Calu3 (cell line): ENCODE measurements at regions of chr17 and their contacts with region 1.

Region 1: DNA sequence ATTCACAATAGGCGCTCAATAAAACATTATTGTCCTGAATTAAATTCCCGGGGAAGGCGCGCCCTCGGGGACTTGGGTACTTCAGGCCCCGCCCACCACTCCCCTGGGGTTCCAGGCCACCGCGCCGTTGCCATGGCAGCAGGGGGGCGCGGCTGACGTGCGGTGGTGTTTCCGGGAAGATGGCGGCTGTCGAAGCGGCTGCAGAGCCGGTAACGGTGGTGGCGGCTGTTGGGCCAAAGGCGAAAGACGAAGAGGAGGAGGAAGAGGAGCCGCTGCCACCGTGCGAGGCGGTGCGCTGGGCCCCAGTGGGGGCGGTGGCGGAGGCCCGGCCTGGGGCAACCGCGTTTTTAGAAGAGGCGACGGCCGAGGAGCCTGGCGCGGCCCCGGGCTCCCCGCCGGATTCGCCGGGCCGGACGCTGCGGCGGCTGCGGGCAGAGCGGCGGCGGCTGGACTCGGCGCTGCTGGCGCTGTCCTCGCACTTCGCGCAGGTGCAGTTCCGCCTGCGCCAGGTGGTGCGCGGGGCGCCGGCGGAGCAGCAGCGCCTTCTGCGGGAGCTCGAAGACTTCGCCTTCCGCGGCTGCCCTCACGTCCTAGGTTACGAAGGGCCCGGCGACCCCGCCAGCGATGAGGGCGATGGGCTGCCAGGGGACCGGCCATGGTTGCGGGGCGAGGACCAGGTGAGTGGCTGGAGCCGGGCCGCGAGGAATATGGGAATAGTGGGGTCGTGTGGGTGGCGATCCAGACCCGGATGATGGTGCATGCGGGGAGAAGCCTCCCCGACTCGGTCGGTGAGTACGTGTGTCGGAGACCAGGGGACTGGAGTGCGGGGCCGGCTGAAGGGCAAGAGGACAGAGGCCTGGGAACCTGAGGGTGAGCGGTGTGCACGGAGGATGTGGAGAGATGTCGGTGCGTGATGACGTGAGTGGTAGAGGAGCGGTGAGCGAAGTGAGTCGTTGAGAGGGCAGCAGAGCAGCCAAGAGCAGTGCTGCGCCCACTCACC is at the start of gene RUNDC1:
- DNase-seq: peak; percentile 99
- H3K4me3 Mint-ChIP-seq: peak within 1 kb of the TSS; percentile 98
- H3K27ac Mint-ChIP-seq: peak within 1 kb of the TSS; percentile 86
- H3K4me1 Mint-ChIP-seq: peaks cover 33% of the 10 kb centered on the region
- H3K27me3 Mint-ChIP-seq: no peaks in the 10 kb centered on the region
- CTCF ChIP-seq: peak; percentile 20
- total RNA-seq, gene RUNDC1: 32.8 and 35.4 TPM in 2 replicates

Region 2: DNA sequence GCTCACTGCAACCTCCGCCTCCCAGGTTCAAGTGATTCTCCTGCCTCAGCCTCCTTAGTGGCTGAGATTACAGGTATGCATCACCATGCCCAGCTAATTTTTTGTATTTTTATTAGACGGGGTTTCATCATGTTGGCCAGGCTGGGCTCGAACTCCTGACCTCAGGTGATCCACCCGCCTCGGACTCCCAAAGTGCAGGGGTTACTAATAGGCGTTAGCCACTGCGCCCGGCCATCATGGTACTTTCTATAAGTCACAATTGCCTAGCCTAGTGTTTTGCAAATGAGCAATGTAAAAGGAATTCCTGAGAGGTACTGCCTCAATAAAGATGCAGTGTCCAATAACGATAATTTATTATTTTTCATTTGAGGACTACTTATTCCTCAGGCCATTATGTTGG is 389.3 kb before region 1 on chr17:
- CTCF ChIA-PET with region 1: interaction called, 10 read pairs
- intact Hi-C with region 1: no loop called
- DNase-seq: no peak
- H3K4me3 Mint-ChIP-seq: no peak overlapping the region
- H3K27ac Mint-ChIP-seq: no peak overlapping the region
- H3K4me1 Mint-ChIP-seq: no peaks in the 10 kb centered on the region
- H3K27me3 Mint-ChIP-seq: no peaks in the 10 kb centered on the region
- CTCF ChIP-seq: no peak

Region 3: DNA sequence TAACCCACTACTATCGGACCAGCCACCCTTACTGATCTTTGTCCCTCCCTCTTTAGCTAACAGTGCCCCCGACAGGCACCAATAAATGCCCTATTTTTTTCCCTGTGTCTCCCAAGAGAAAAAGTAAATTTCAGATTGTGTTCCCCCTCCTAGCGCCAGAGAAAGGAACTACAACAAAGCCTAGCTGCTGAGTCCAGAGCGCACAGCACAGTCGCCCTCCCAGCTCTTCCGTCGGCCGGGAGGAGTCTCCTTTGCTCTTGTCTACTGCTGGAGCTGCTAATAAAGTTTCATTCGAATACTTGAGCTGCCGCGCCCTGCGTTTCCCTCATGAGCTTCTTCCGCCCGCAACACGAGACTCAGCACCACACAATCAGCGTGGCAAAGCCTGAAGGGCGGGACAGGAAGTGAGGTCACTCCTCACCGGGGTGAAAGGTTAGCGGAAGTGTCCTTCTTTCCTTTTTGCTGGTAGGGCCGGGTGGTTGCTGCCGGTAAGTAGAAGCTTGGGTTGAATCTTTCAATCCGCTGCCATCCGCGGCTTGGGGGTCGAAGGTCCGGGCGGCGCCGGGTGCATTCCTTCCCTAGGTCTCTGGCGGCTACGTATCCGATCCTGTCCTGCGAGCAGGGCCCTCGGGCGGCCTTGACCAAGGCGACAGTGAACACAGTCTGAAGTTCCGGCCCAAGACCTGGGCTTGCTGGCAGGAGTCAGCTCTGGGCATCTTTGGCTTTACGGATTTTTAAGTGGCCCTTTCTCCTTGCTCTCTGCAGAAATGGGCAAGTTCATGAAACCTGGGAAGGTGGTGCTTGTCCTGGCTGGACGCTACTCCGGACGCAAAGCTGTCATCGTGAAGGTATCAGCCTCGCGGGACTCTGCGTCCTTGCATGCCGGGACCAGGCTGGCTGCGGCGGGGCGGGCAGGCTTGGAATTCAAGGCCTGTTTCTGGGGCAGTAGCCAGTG is 17.6 kb after region 1 on chr17 and contains the start of gene RPL27:
- CTCF ChIA-PET with region 1: interaction called, 15 read pairs
- intact Hi-C with region 1: loop called (anchors 1 kb)
- DNase-seq: peak; percentile 99
- H3K4me3 Mint-ChIP-seq: peak within 1 kb of the TSS; percentile 99
- H3K27ac Mint-ChIP-seq: peak within 1 kb of the TSS; percentile 100
- H3K4me1 Mint-ChIP-seq: peaks cover 19% of the 10 kb centered on the region
- H3K27me3 Mint-ChIP-seq: no peaks in the 10 kb centered on the region
- CTCF ChIP-seq: peak; percentile 96
- total RNA-seq, gene RPL27: 1,193 and 1,292 TPM in 2 replicates